Panc1 (cell line): ENCODE measurements at regions of chr19 and their contacts with region 1.

Region 1: GRCh38 chr19:38618590-38619360 is at the start of gene EIF3K:
- DNase-seq: peak; percentile 100
- ATAC-seq: peak; percentile 94
- H3K4me3 ChIP-seq: peak within 1 kb of the TSS; percentile 47 to 85
- H3K27ac ChIP-seq: peak within 1 kb of the TSS; percentile 96
- H3K4me1 ChIP-seq: peaks cover 16% of the 10 kb centered on the region
- H3K27me3 ChIP-seq: no peaks in the 10 kb centered on the region
- CTCF ChIP-seq: no peak
- total RNA-seq, gene EIF3K: 2,011 TPM

Region 2: DNA sequence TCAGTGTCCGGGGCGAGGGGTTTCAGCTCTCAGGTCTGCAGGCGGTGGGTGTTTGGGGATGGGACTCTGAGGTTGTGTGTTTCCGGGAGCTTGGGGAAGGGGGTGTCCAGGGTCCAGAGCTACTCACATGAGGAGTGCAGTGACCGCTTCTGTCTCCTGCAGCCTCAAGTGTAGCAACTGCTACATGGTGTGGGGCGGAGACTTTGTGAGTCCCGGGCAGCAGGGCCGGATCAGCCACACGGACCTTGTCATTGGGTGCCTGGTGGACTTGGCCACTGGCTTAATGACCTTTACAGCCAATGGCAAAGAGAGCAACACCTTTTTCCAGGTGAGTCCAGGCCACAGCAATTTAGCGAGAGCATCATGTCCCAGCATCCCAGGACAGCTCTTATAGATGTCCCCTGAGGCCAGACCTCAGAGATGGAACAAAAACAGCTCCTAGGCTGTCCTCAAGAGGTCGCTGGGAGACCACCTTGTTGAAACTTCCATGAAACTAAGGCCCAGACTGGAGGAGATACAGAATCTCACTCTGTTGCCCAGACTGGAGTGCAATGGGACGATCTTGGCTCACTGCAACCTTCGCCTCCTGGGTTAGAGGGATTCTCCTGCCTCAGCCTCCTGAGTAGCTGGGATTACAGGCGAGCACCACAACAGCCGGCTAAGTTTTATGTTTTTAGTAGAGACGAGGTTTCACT is 140.4 kb before region 1 on chr19:
- CTCF ChIA-PET with region 1: no interaction called
- POLR2A ChIA-PET with region 1: interaction called, 11 read pairs
- in situ Hi-C with region 1: no loop called
- intact Hi-C with region 1: no loop called
- DNase-seq: no peak
- ATAC-seq: peak; percentile 91
- H3K4me3 ChIP-seq: no peak overlapping the region
- H3K27ac ChIP-seq: no peak overlapping the region
- H3K4me1 ChIP-seq: no peaks in the 10 kb centered on the region
- H3K27me3 ChIP-seq: no peaks in the 10 kb centered on the region
- CTCF ChIP-seq: no peak; the same call in 1 of the 2 replicates

Region 3: DNA sequence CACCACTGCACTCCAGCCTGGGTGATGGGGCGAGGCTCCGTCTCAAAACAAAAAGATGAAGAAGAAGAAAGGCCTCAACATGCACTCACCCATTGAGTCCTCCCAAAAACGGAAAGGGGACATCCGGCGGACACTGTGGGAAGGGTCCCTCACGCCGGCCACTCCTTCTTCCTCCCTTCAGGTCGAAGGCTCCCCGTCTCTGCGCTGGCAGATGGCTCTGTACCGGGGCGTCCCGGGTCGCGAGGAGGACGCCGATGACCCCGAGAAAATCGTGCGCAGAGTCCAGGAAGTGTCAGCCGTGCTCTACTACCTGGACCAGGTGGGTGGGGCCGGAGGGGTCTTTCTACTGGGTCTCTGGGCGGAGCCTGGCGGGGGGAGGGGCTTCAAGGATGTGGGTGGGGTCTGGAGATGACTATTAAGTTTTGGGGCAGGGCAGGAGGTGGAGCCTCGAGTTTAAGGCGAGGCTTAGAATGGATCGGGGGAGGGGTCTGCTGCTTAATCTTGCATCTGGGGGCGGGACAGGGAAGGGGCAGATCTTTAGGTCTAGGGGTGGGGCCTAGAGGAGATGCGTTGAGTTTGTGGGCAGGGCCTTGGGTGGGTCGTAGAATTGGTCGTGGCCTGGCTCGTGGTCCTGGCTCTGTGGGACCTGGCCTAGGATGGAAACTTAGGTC is 91.2 kb before region 1 on chr19:
- CTCF ChIA-PET with region 1: no interaction called
- POLR2A ChIA-PET with region 1: interaction called, 15 read pairs
- in situ Hi-C with region 1: no loop called
- intact Hi-C with region 1: no loop called
- DNase-seq: no peak
- ATAC-seq: peak; percentile 20
- H3K4me3 ChIP-seq: peak overlapping the region in 1 of 2 experiments; percentile 32; a peak in 2 of 4 replicates
- H3K27ac ChIP-seq: no peak overlapping the region
- H3K4me1 ChIP-seq: peaks cover 4% of the 10 kb centered on the region; the same call in 1 of the 2 replicates
- H3K27me3 ChIP-seq: no peaks in the 10 kb centered on the region
- CTCF ChIP-seq: no peak

Region 4: GRCh38 chr19:38559428-38560401 is 59.1 kb before region 1 on chr19:
- CTCF ChIA-PET with region 1: interaction called, 12 read pairs
- POLR2A ChIA-PET with region 1: interaction called, 4 read pairs
- in situ Hi-C with region 1: no loop called
- intact Hi-C with region 1: no loop called
- DNase-seq: no peak
- ATAC-seq: no peak
- H3K4me3 ChIP-seq: no peak overlapping the region
- H3K27ac ChIP-seq: no peak overlapping the region
- H3K4me1 ChIP-seq: 0 out of 2 replicates have a peak, but pooled peaks cover 2% of the 10 kb centered on the region
- H3K27me3 ChIP-seq: no peaks in the 10 kb centered on the region
- CTCF ChIP-seq: no peak

Region 5: GRCh38 chr19:38640368-38640767 is 21.6 kb after region 1 on chr19:
- CTCF ChIA-PET with region 1: interaction called, 44 read pairs
- POLR2A ChIA-PET with region 1: interaction called, 13 read pairs
- in situ Hi-C with region 1: no loop called
- intact Hi-C with region 1: no loop called
- DNase-seq: no peak
- ATAC-seq: peak; percentile 15
- H3K4me3 ChIP-seq: no peak overlapping the region
- H3K27ac ChIP-seq: no peak overlapping the region
- H3K4me1 ChIP-seq: peaks cover 8% of the 10 kb centered on the region
- H3K27me3 ChIP-seq: no peaks in the 10 kb centered on the region
- CTCF ChIP-seq: no peak

Region 6: DNA sequence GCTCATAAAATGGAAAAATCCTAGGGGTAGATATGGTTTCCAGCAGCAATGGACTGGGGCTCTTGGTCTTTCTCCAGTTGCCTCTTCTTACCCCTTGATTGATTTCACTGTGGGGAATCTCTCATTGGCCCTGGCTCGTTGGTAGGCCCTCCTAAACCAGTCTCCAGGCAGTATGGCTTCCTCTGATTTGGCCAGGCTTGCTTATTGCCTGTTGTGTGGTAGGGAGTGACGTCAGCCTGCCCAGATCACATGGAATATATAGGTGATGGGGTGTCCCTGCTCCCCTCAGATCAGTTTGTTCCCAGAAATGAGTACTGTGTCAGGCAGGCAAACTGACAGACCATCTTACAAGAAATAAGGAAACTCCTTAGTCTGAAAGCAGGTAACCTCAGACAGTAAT is 890.5 kb after region 1 on chr19:
- CTCF ChIA-PET with region 1: no interaction called
- POLR2A ChIA-PET with region 1: interaction called, 10 read pairs
- in situ Hi-C with region 1: no loop called
- intact Hi-C with region 1: no loop called
- DNase-seq: no peak
- ATAC-seq: no peak
- H3K4me3 ChIP-seq: no peak overlapping the region
- H3K27ac ChIP-seq: no peak overlapping the region
- H3K4me1 ChIP-seq: peaks cover 16% of the 10 kb centered on the region
- H3K27me3 ChIP-seq: peaks cover 4% of the 10 kb centered on the region
- CTCF ChIP-seq: no peak

Region 7: DNA sequence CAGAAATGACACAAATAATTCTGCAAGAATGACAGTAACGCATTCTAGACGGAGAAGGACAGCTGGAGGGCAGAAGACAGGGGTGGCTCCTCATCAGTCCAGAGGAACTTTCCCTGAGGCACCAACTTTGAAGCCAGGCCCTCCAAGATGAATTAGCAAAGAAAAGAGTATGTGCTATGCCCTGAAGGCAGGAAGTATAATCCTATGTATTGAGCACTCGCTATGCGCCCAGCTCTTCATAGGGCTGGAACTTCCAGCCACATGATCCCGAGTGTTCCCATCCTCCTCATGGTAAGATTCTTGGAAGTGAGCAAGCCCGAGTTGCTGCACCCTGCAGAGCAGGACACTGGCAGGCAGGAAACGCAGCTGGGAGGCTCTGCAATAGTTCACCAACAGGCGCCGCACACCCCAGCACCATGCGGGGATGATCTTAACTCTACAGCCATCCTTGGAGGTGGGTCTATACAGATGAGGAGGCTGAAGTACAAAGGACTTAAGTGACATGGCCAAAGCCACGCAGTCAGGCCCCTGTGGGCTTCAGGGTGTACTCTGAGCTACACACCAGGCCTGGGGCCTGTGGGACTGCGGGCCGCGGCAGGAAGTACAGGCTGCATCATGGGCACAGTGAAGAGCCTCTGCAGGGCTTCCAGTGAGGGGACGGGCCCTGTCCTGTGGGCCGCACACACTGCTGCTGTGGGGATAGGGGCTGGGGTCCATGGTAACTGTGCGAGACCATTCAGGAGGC is 1704.3 kb after region 1 on chr19:
- CTCF ChIA-PET with region 1: no interaction called
- POLR2A ChIA-PET with region 1: interaction called, 11 read pairs
- in situ Hi-C with region 1: no loop called
- intact Hi-C with region 1: no loop called
- DNase-seq: no peak
- ATAC-seq: peak; percentile 10
- H3K4me3 ChIP-seq: no peak overlapping the region
- H3K27ac ChIP-seq: no peak overlapping the region
- H3K4me1 ChIP-seq: no peaks in the 10 kb centered on the region
- H3K27me3 ChIP-seq: no peaks in the 10 kb centered on the region
- CTCF ChIP-seq: no peak